ENCODE measurements at regions of chr6 and their contacts with region 1.

Region 1: DNA sequence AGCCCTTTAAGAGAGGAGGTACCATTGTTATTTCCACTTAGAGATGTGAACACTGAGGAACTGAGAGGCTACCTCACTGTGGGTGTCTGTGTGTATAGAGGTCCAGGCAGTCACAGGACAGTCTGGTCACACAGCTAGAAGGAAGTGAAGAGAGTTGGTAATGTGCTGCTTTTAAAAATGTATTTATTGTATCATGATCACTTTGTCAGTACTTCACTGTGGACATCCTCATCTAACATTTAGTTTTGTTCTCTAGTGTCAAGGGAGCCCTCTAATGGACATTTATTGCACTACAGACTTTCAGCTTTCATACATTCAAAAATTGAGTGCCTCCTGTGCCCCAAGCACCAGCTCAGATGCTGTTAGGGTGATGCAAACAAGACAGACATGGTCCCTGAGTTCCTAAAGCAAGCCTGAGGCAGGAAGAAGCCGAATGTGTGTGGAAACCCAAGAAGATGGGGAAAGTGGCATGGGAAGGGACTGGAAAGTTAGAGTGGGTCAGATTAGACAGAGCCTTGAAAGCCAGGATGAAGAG is 123.0 kb downstream of the SLC16A10 start:
- DNase-seq: no peak
- H3K4me3 ChIP-seq: no peak overlapping the region
- H3K27ac ChIP-seq: no peak overlapping the region
- H3K4me1 ChIP-seq: peaks cover 0 to 26% of the 10 kb centered on the region in 2 donors
- H3K27me3 ChIP-seq: no peaks in the 10 kb centered on the region
- CTCF ChIP-seq: peak; percentile 53 to 84 (median 67)

Region 2: GRCh38 chr6:110512979-110513378 is 697.3 kb before region 1 on chr6:
- intact Hi-C with region 1: no loop called
- DNase-seq: no peak
- H3K4me3 ChIP-seq: no peak overlapping the region
- H3K27ac ChIP-seq: no peak overlapping the region
- H3K4me1 ChIP-seq: no peaks in the 10 kb centered on the region
- H3K27me3 ChIP-seq: no peaks in the 10 kb centered on the region
- CTCF ChIP-seq: no peak

Region 3: DNA sequence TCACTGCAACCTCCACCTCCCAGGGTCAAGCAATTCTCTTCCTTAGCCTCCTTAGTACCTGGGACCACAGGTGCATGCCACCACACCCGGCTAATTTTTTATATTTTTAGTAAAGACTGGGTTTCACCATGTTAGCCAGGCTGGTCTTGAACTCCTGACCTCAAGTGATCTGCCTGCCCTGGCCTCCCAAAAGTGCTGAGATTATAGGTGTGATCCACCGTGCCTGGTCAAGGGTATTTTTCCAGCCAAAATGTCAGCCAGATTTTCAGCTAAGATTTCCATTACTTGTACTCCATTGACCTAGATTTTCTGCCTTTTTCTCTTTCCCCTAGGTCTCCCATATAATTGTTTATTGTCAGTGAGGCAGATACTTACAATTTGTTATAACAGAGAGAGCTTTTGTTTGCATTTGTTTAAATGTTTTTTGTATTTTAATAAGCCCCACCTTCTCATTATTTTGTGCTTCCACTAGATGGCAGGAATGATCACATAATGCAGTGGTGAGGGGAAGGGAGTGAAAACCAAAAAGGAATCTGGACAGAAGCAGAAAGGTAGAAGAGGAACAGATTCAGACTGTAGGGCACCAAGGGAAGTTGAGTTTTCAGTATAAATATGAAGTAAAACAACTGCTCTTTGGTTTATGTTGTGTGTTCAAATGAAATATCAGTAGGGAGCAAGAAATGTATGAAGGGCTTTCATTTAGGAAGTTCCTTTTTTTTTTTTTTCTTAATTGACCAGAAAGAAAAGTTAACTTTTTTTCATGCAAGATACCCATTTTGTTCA is 198.7 kb before region 1 on chr6:
- intact Hi-C with region 1: loop called (anchors 1 kb)
- DNase-seq: no peak
- H3K4me3 ChIP-seq: no peak overlapping the region
- H3K27ac ChIP-seq: no peak overlapping the region
- H3K4me1 ChIP-seq: peaks cover 3 to 5% of the 10 kb centered on the region in 2 donors
- H3K27me3 ChIP-seq: no peaks in the 10 kb centered on the region
- CTCF ChIP-seq: peak; percentile 45 to 64 (median 55)

Region 4: GRCh38 chr6:111057074-111057752 is 153.0 kb before region 1 on chr6:
- intact Hi-C with region 1: loop called (anchors 2 kb)
- DNase-seq: no peak
- H3K4me3 ChIP-seq: no peak overlapping the region
- H3K27ac ChIP-seq: no peak overlapping the region
- H3K4me1 ChIP-seq: no peaks in the 10 kb centered on the region
- H3K27me3 ChIP-seq: no peaks in the 10 kb centered on the region
- CTCF ChIP-seq: peak; percentile 37 to 67 (median 40)

Region 5: GRCh38 chr6:111230351-111231089 is 20.3 kb after region 1 on chr6:
- intact Hi-C with region 1: loop called (anchors 2 kb)
- DNase-seq: no peak
- H3K4me3 ChIP-seq: no peak overlapping the region
- H3K27ac ChIP-seq: peak overlapping the region in 1 of 2 donors; percentile 59
- H3K4me1 ChIP-seq: peaks cover 0 to 24% of the 10 kb centered on the region in 2 donors
- H3K27me3 ChIP-seq: no peaks in the 10 kb centered on the region
- CTCF ChIP-seq: no peak

Measured in ascending aorta (tissue), 2 donors.